ENCODE measurements at regions of chr10 and their contacts with region 1.

Region 1: DNA sequence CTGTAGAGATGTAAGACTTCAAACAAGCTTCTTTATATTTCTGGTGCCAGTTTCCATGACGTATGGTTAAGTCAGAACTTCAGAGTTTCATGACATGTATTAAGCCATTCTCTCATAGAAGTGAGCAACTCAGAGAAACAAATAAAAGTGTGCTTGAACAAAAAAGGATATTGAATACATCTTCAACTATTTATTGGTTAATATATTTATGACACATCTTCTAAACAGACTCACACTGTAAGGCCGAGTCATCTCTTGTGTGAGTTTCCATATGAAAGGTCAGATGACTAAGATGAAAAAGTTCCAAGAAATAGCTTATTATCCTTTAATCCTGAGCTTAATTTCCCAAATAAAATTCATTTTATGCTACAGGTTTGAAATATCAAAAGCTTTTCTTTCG is 105.5 kb upstream of the CSTF2T start:
- DNase-seq: no peak
- ATAC-seq: no peak
- H3K4me3 ChIP-seq: no peak overlapping the region
- H3K27ac ChIP-seq: no peak overlapping the region
- H3K4me1 ChIP-seq: peaks cover 6 to 15% of the 10 kb centered on the region in 2 donors
- H3K27me3 ChIP-seq: no peaks in the 10 kb centered on the region

Region 2: GRCh38 chr10:51846856-51847506 is 42.1 kb after region 1 on chr10:
- intact Hi-C with region 1: loop called in 1 of 2 experiments (anchors 5 kb)
- DNase-seq: no peak
- ATAC-seq: no peak
- H3K4me3 ChIP-seq: no peak overlapping the region
- H3K27ac ChIP-seq: no peak overlapping the region
- H3K4me1 ChIP-seq: peaks cover 0 to 2% of the 10 kb centered on the region in 2 donors
- H3K27me3 ChIP-seq: no peaks in the 10 kb centered on the region